Transverse colon (tissue), 4 donors: ENCODE measurements at regions of chr9 and their contacts with region 1.

Region 1: GRCh38 chr9:6827439-6827838 is 69.7 kb downstream of the KDM4C start:
- DNase-seq: no peak
- H3K4me3 ChIP-seq: no peak overlapping the region
- H3K27ac ChIP-seq: no peak overlapping the region
- H3K4me1 ChIP-seq: no peaks in the 10 kb centered on the region
- H3K27me3 ChIP-seq: no peaks in the 10 kb centered on the region
- CTCF ChIP-seq: peak; percentile 22 to 42 (median 33)
- EP300 ChIP-seq: no peak
- POLR2A ChIP-seq: no peak

Region 2: DNA sequence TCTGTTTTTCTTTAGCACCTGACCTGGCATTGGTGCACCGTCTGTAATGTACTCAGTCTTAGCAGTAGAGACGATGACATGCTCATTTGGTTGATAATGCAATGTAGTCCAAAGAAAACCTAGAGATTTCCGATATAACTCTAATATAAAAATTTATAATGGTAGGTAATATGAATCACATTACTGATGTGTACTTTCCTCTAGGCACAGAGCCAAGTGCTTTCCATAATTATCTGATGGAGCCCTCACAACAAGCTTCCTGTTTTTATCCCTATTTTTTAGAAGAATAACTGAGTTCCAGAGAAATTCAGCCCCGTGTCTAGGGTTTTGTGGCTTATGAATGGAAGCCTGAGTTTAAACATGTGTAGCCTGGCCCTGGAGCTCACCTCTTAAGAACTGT is 16.0 kb before region 1 on chr9:
- in situ Hi-C with region 1: no loop called
- intact Hi-C with region 1: loop called (anchors 1 kb)
- DNase-seq: no peak
- H3K4me3 ChIP-seq: no peak overlapping the region
- H3K27ac ChIP-seq: no peak overlapping the region
- H3K4me1 ChIP-seq: peaks cover 0 to 8% (median 0%) of the 10 kb centered on the region in 4 donors
- H3K27me3 ChIP-seq: no peaks in the 10 kb centered on the region
- CTCF ChIP-seq: no peak
- EP300 ChIP-seq: no peak
- POLR2A ChIP-seq: no peak